ENCODE measurements at regions of chr10 and their contacts with region 1.

Region 1: DNA sequence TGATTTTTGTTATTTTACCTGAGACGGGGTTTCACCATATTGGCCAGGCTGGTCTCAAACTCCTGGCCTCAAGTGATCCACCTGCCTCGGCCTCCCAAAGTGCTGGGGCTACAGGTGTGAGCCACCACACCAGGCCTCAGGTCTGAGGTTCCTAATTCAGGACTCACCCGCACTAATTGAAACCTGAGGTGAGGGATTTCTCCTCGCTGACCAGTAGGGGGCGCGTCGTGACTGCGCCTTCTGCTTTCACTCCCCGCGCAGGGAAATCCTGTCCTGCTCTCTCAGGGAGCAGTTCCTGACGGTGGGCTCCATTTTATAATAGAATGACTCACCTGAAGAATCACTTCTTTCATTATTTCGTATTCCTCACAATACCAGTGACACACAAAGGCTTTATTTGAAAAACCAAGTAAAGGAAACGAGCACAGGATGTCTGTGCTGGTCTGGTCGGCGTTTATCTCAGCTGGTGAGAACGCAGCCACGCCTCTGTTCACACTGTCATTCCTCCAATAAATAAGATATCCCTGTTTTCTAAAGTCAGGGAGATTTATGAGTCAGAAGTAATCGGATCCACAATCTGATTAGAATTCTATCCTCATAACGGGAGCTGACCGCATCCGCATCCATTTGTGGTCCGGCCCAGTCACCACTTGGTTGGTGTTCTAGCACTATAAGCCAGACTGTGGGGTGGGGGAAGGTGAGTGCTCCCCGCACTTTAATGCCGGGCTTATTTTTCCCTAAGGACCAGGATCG is 35.4 kb downstream of the BAG3 start:
- DNase-seq: peak; percentile 94
- H3K4me3 ChIP-seq: peak overlapping the region in 6 of 8 donors; percentile 8 to 54 (median 22)
- H3K27ac ChIP-seq: peak overlapping the region in 4 of 8 donors; percentile 6 to 42 (median 20)
- H3K4me1 ChIP-seq: peaks cover 0 to 29% (median 19%) of the 10 kb centered on the region in 6 donors
- H3K27me3 ChIP-seq: no peaks in the 10 kb centered on the region
- CTCF ChIP-seq: peak; percentile 72 to 94 (median 90)
- POLR2A ChIP-seq: no peak

Region 2: GRCh38 chr10:118850418-118851061 is 836.1 kb before region 1 on chr10:
- intact Hi-C with region 1: no loop called
- DNase-seq: peak; percentile 89
- H3K4me3 ChIP-seq: no peak overlapping the region
- H3K27ac ChIP-seq: no peak overlapping the region
- H3K4me1 ChIP-seq: no peaks in the 10 kb centered on the region
- H3K27me3 ChIP-seq: peaks cover 0 to 15% (median 0%) of the 10 kb centered on the region in 7 donors
- CTCF ChIP-seq: peak in 10 of 11 experiments; percentile 10 to 70 (median 50)
- POLR2A ChIP-seq: no peak

Region 3: GRCh38 chr10:119538632-119539513 is 147.7 kb before region 1 on chr10:
- intact Hi-C with region 1: no loop called
- DNase-seq: no peak
- H3K4me3 ChIP-seq: peak overlapping the region in 1 of 8 donors; percentile 0
- H3K27ac ChIP-seq: peak overlapping the region in 4 of 8 donors; percentile 19 to 58 (median 49)
- H3K4me1 ChIP-seq: peaks cover 0 to 92% (median 55%) of the 10 kb centered on the region in 6 donors
- H3K27me3 ChIP-seq: peaks cover 0 to 26% (median 0%) of the 10 kb centered on the region in 7 donors
- CTCF ChIP-seq: no peak
- POLR2A ChIP-seq: no peak

Region 4: GRCh38 chr10:119750391-119751230 is 64.0 kb after region 1 on chr10:
- intact Hi-C with region 1: loop called (anchors 10 kb)
- DNase-seq: peak; percentile 80
- H3K4me3 ChIP-seq: no peak overlapping the region
- H3K27ac ChIP-seq: no peak overlapping the region
- H3K4me1 ChIP-seq: peaks cover 0 to 23% (median 10%) of the 10 kb centered on the region in 6 donors
- H3K27me3 ChIP-seq: no peaks in the 10 kb centered on the region
- CTCF ChIP-seq: peak; percentile 74 to 93 (median 89)
- POLR2A ChIP-seq: no peak

Region 5: GRCh38 chr10:119826771-119827170 is 140.2 kb after region 1 on chr10:
- intact Hi-C with region 1: no loop called
- DNase-seq: no peak
- H3K4me3 ChIP-seq: no peak overlapping the region
- H3K27ac ChIP-seq: no peak overlapping the region
- H3K4me1 ChIP-seq: no peaks in the 10 kb centered on the region
- H3K27me3 ChIP-seq: no peaks in the 10 kb centered on the region
- CTCF ChIP-seq: no peak
- POLR2A ChIP-seq: no peak

Region 6: GRCh38 chr10:119859420-119860258 is 173.0 kb after region 1 on chr10:
- intact Hi-C with region 1: loop called (anchors 5 kb)
- DNase-seq: no peak
- H3K4me3 ChIP-seq: no peak overlapping the region
- H3K27ac ChIP-seq: peak overlapping the region in 2 of 8 donors; percentile 4 to 11
- H3K4me1 ChIP-seq: peaks cover 0 to 49% (median 22%) of the 10 kb centered on the region in 6 donors
- H3K27me3 ChIP-seq: no peaks in the 10 kb centered on the region
- CTCF ChIP-seq: peak in 9 of 11 experiments; percentile 35 to 66 (median 58)
- POLR2A ChIP-seq: no peak

Region 7: DNA sequence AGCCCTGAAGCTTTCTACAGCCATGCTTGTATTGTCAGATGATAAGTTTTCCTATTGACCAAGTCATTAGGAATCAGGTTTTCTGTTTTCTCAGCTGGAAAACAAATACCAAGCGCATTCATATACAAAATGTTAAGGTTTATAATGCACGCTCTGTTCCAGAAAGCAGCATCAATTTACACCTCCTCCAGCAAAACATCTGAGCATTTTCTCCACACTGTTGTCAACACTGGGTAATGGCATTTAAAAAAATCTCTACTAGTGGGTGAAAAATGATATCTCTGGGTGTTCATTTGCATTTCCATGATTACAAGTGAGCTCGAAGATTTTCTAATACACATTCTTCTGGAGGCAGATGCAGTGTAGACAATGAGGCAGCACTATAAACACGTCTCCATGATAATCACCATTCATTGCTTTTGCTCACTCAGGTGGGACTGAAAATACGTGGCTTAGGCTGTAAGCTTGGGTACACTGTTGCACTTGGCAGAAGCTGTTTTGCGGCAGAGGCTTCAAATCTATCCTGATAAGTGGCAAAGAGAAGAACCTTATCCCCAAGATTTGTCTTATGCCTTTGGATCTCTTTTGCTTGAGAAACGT is 655.6 kb after region 1 on chr10:
- intact Hi-C with region 1: loop called (anchors 10 kb)
- DNase-seq: no peak
- H3K4me3 ChIP-seq: no peak overlapping the region
- H3K27ac ChIP-seq: no peak overlapping the region
- H3K4me1 ChIP-seq: no peaks in the 10 kb centered on the region
- H3K27me3 ChIP-seq: peaks cover 0 to 10% (median 0%) of the 10 kb centered on the region in 7 donors
- CTCF ChIP-seq: no peak
- POLR2A ChIP-seq: no peak